ENCODE measurements at regions of chr20 and their contacts with region 1.

Region 1: GRCh38 chr20:31951530-31952453 is at the start of gene PDRG1:
- DNase-seq: peak; percentile 97
- total RNA-seq, gene PDRG1: 7.9 TPM

Region 2: DNA sequence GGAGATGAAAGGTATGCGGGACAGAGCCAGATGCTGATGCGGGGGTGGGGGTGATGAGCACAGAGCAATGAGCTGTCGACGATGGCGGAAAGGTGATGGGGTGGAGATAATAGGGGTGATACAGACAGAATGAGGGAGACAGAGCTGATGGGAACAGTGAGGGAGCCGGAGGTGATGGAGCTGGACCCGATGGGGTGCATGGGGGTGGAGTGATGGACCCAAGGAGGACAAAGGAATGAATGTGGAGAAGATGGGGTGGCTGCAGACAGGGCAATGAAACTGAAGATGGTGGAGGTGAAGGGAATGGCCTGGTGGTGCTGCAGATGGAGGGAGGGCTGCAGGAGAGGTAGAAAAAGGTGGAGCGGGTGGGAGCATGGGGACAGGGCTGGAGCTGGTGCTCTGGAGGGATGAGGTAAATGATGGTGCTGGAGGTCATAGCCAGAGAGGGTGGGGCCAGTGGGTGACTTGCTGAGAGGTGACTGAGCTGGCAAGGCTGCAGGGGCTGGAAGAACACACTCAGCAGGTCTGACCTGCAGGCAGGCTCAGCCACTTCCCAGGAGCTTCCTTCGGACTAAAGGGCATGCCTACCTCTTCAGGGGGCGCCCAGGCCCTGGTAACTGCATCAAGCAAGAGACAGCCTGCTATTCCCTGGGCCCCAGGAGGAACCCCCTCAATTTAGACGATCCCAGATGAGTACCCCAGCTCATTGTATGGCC is 100.4 kb before region 1 on chr20:
- intact Hi-C with region 1: loop called (anchors 2 kb)
- DNase-seq: no peak

Region 3: DNA sequence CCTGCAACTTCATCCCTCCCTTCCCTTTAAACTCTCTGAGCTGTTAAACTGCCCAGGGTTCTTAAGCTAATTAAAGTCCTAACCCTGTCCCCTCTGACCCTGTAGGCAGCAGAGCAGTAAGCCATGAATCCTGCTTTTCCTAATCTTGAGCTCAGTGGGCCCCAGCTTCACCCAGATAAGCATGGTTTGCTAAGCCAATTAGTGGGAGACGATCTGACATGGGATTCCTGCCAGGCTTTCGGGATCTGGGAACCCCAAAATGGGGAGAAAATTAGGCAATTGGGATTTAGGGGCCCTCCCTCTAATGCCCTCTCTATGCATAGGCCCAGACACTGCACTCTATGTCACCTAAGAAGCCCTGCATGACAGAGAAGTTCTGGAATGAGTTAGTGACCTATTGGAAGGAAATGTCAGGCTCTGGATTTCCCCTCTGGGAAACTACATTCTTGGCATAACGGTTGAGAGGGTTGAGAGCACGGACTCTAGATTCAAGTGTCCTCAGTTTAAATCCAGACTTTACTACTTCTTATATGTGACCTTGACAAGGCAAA is 20.8 kb after region 1 on chr20:
- intact Hi-C with region 1: no loop called
- DNase-seq: no peak

Region 4: GRCh38 chr20:32031007-32031958 is 79.5 kb after region 1 on chr20:
- intact Hi-C with region 1: loop called (anchors 5 kb)
- DNase-seq: peak; percentile 88